Activated CD4-positive, alpha-beta T cell treated with anti-CD3 and anti-CD28 coated beads for 36 hours (primary cell): ENCODE measurements at regions of chr2 and their contacts with region 1.

Region 1: GRCh38 chr2:69436938-69437750 is at the start of gene NFU1:
- DNase-seq: peak; percentile 94
- ATAC-seq: peak; percentile 93
- H3K4me3 Mint-ChIP-seq: peak within 1 kb of the TSS; percentile 93
- H3K27ac Mint-ChIP-seq: peak within 1 kb of the TSS; percentile 95
- H3K4me1 Mint-ChIP-seq: peaks cover 25% of the 10 kb centered on the region
- H3K27me3 Mint-ChIP-seq: no peaks in the 10 kb centered on the region
- total RNA-seq, gene NFU1: 30.0 to 34.3 TPM

Region 2: GRCh38 chr2:69375494-69376353 is 61.4 kb before region 1 on chr2:
- CTCF ChIA-PET with region 1: interaction called, 8 read pairs
- POLR2A ChIA-PET with region 1: interaction called, 3 read pairs
- intact Hi-C with region 1: loop called in 1 of 2 experiments (anchors 1 kb)
- DNase-seq: no peak
- ATAC-seq: peak; percentile 85
- H3K4me3 Mint-ChIP-seq: no peak overlapping the region
- H3K27ac Mint-ChIP-seq: peak overlapping the region; percentile 1
- H3K4me1 Mint-ChIP-seq: peaks cover 15% of the 10 kb centered on the region
- H3K27me3 Mint-ChIP-seq: no peaks in the 10 kb centered on the region

Region 3: DNA sequence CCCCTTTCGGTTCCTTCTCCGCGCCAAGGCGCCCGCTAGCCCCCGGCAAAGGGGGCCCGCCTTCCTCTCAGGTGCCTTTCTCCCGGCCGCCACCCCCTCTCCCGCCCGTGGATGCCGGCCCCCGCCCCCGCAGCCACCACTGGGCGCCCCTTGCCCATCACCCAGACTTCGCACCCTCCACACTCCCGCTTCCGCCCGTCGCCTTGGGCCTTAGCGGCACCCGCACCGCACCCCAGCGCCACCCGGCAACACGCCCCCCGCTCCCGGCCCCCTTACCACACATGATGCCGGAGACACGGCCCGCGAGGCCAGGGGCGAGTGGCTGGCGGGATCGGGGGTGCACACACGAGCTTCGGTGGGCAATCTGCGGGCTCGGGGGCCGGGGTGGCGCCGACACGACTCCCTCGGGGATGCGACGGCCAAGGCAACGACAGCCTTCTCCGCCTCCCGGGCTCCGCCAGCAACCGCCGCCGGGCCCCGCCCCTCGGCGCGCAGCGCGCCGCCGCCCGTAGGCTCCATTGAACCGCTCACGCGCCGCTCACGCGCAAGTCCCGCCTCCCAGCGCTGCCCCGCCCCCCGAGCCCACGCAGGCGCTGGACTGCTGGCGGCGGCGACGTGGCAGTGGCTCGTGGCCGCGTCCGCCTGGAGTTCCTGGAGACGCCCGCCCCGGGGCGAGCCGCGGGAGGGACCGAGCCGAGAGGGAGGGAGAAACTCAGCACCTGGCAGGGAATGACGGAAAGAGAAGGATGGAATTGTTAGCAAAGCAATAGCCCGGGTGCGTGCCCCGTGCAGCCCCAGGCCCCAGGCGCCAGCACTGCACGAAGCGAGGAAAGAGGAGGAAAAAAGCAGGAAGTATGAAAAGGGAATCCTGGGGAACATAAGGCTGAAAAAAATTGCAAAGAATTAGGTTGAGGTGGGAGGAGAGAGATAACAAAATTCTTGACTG is 50.1 kb before region 1 on chr2 and contains the start of gene GFPT1:
- CTCF ChIA-PET with region 1: interaction called, 5 read pairs
- POLR2A ChIA-PET with region 1: interaction called, 3 read pairs
- intact Hi-C with region 1: loop called (anchors 1 to 2 kb)
- DNase-seq: peak; percentile 96
- ATAC-seq: peak; percentile 96
- H3K4me3 Mint-ChIP-seq: peak within 1 kb of the TSS; percentile 81
- H3K27ac Mint-ChIP-seq: peak within 1 kb of the TSS; percentile 92
- H3K4me1 Mint-ChIP-seq: peaks cover 45% of the 10 kb centered on the region
- H3K27me3 Mint-ChIP-seq: no peaks in the 10 kb centered on the region
- total RNA-seq, gene GFPT1: 31.0 to 36.1 TPM

Region 4: GRCh38 chr2:69422198-69422597 is 14.9 kb before region 1 on chr2:
- CTCF ChIA-PET with region 1: interaction called, 10 read pairs
- POLR2A ChIA-PET with region 1: interaction called, 3 read pairs
- intact Hi-C with region 1: no loop called
- DNase-seq: no peak
- ATAC-seq: no peak
- H3K4me3 Mint-ChIP-seq: no peak overlapping the region
- H3K27ac Mint-ChIP-seq: no peak overlapping the region
- H3K4me1 Mint-ChIP-seq: no peaks in the 10 kb centered on the region
- H3K27me3 Mint-ChIP-seq: no peaks in the 10 kb centered on the region

Region 5: DNA sequence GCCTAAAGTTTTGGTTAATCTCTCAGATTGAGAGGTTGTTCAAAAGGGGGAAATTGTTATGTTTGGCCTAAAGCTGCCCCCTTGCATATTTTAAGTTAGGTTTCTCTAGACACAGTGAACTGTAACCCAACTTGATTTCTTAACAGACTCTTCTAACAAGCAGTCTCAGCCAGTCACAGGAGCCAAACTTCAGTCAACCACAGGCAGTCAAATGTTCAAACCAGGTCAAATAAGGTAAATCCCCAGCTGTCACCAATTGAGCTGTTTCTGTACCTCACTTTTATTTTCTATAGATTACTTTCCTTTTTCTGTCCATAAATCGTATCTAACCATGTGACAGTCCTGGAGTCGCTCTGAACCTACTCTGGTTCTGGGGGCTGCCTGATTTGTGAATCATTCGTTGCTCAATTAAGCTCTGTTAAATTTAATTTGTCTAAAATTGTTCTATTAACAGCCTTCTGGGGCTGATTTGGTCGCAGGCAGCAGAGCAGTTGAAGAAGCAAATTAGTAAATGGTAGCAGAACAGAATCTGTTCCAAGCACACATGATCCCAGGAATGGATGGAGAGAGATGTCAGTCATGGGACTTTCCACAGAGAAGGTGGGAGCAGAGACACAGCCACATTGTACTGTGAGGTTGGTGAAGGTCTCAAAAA is 16.5 kb after region 1 on chr2:
- CTCF ChIA-PET with region 1: interaction called, 14 read pairs
- POLR2A ChIA-PET with region 1: interaction called, 8 read pairs
- intact Hi-C with region 1: loop called in 1 of 2 experiments (anchors 1 kb)
- DNase-seq: peak; percentile 63
- ATAC-seq: peak; percentile 96
- H3K4me3 Mint-ChIP-seq: no peak overlapping the region
- H3K27ac Mint-ChIP-seq: peak overlapping the region; percentile 74
- H3K4me1 Mint-ChIP-seq: peaks cover 30% of the 10 kb centered on the region
- H3K27me3 Mint-ChIP-seq: no peaks in the 10 kb centered on the region

Region 6: GRCh38 chr2:69509007-69509749 is 72.0 kb after region 1 on chr2:
- CTCF ChIA-PET with region 1: interaction called, 4 read pairs
- POLR2A ChIA-PET with region 1: no interaction called
- intact Hi-C with region 1: loop called (anchors 2 to 5 kb)
- DNase-seq: no peak
- ATAC-seq: no peak
- H3K4me3 Mint-ChIP-seq: no peak overlapping the region
- H3K27ac Mint-ChIP-seq: peak overlapping the region; percentile 82
- H3K4me1 Mint-ChIP-seq: peaks cover 39% of the 10 kb centered on the region
- H3K27me3 Mint-ChIP-seq: no peaks in the 10 kb centered on the region

Region 7: GRCh38 chr2:69717861-69718273 is 280.7 kb after region 1 on chr2:
- CTCF ChIA-PET with region 1: no interaction called
- POLR2A ChIA-PET with region 1: no interaction called
- intact Hi-C with region 1: loop called in 1 of 2 experiments (anchors 5 kb)
- DNase-seq: no peak
- ATAC-seq: no peak
- H3K4me3 Mint-ChIP-seq: no peak overlapping the region
- H3K27ac Mint-ChIP-seq: no peak overlapping the region
- H3K4me1 Mint-ChIP-seq: peaks cover 15% of the 10 kb centered on the region
- H3K27me3 Mint-ChIP-seq: no peaks in the 10 kb centered on the region